ENCODE measurements at regions of chrX and their contacts with region 1.

Region 1: GRCh38 chrX:129931411-129932015 is 25.5 kb downstream of the UTP14A start:
- DNase-seq: peak; percentile 94
- ATAC-seq: peak; percentile 91 to 97

Region 2: DNA sequence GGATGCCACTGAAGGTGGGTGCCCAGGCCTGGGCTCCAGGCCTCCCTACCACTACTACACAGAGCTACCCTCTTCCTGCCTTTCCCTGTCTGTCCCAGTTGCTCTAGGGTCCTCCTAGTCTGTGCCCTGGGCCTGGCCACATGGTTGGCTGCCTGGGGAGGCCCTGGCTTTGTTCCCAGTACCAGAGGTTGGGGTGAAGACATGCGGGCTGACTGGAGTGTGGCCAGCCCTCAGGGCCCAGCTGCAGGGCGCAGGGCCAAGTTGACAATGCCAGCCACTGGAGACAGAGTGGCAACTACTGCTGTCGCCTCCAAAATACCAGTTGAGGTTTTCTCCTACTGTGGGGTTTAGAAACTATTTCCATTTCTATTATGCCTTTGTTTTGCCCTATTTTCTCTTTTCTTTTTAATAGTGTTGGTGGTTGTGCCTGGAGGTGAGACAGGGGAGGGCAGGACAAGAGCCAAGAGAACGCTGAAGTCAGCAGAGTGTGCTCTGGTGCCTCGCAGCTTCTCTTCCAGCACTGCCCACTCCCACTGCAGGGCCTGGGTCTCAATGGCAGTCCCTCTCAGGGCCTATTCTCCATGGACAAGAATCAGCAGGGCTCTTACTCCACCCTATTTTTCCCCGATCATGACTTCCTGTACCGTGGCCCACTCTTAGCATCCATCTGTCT is 225.0 kb before region 1 on chrX:
- intact Hi-C with region 1: no loop called
- DNase-seq: peak; percentile 39
- ATAC-seq: peak; percentile 73 to 74

Region 3: GRCh38 chrX:129982274-129983251 is 51.0 kb after region 1 on chrX and contains the start of gene BCORL1:
- intact Hi-C with region 1: loop called in 1 of 2 experiments (anchors 5 kb)
- DNase-seq: peak; percentile 90
- ATAC-seq: peak; percentile 89 to 94
- total RNA-seq, gene BCORL1: 7.5 to 11.3 TPM

Region 4: GRCh38 chrX:130110379-130111219 is 179.1 kb after region 1 on chrX and contains the start of gene ELF4:
- intact Hi-C with region 1: no loop called
- DNase-seq: no peak
- ATAC-seq: peak; percentile 65 to 83
- total RNA-seq, gene ELF4: 4.2 to 6.4 TPM

Measured in left cardiac atrium (tissue), 4 donors.